HCT116 (cell line): ENCODE measurements at regions of chr11 and their contacts with region 1.

Region 1: GRCh38 chr11:119101759-119102423 is at the start of gene DPAGT1:
- DNase-seq: peak; percentile 98
- ATAC-seq: peak; percentile 80
- H3K4me3 ChIP-seq: peak within 1 kb of the TSS; percentile 58 to 78
- H3K27ac ChIP-seq: peak within 1 kb of the TSS; percentile 96
- H3K4me1 ChIP-seq: peaks cover 33 to 42% of the 10 kb centered on the region in 2 experiments
- H3K27me3 ChIP-seq: no peaks in the 10 kb centered on the region
- CTCF ChIP-seq: no peak
- POLR2A ChIP-seq: no peak
- RAD21 ChIP-seq: no peak
- total RNA-seq, gene DPAGT1: 45.1 TPM

Region 2: DNA sequence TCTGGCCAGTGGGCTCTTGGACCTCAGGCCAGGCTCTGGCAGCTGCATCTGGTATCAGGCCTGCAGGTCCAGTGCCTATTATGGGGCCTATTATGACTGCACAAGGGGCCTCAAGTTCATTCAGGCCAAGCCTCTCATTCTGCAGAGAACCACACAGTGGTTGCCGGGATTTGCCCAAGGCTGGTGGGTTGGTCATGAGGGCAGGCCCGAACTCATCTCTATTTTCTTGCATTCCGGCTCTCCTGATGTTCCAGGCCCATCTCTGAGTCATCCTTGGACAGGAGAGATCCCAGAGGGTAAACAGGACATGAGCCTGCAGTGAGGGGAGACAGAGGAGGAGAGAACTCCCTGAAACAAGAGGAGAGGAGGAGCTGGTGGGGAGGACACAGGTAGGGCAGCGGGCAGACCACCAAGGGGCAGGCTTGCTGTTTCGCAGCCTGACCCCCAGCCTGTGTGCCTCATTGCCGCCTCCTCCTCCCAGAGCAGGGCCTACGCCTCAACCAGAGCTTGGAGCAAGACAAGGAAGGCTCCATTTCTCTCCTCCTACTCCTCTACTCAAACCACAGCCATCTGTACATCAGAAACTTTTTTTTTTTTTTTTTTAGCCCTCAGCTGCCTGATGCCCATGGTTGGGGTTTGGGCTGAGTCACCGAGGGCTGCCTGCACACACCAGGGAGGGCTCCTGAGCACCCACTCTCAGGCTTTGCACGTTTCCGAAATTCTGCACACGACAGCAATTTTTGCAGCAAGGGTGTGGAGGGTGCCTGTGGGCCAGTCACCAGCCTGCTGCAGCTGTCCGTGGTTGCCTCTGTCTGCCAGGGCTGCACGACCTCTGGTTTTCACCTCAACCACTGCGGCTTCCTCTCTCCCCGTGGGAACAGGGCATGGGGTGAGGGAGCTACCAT is 409.7 kb before region 1 on chr11:
- CTCF ChIA-PET with region 1: no interaction called
- POLR2A ChIA-PET with region 1: no interaction called
- RAD21 ChIA-PET with region 1: no interaction called
- intact Hi-C with region 1: no loop called
- DNase-seq: no peak
- ATAC-seq: no peak
- H3K4me3 ChIP-seq: no peak overlapping the region
- H3K27ac ChIP-seq: no peak overlapping the region
- H3K4me1 ChIP-seq: peaks cover 5 to 33% of the 10 kb centered on the region in 2 experiments; a peak in 3 of 4 replicates
- H3K27me3 ChIP-seq: no peaks in the 10 kb centered on the region
- CTCF ChIP-seq: no peak
- POLR2A ChIP-seq: no peak
- RAD21 ChIP-seq: no peak

Region 3: GRCh38 chr11:118953265-118953664 is 148.6 kb before region 1 on chr11:
- CTCF ChIA-PET with region 1: no interaction called
- POLR2A ChIA-PET with region 1: no interaction called
- RAD21 ChIA-PET with region 1: no interaction called
- intact Hi-C with region 1: no loop called
- DNase-seq: no peak
- ATAC-seq: no peak
- H3K4me3 ChIP-seq: no peak overlapping the region
- H3K27ac ChIP-seq: no peak overlapping the region
- H3K4me1 ChIP-seq: peaks cover 0 to 19% of the 10 kb centered on the region in 2 experiments; a peak in 2 of 4 replicates
- H3K27me3 ChIP-seq: no peaks in the 10 kb centered on the region
- CTCF ChIP-seq: no peak
- POLR2A ChIP-seq: no peak
- RAD21 ChIP-seq: no peak

Region 4: DNA sequence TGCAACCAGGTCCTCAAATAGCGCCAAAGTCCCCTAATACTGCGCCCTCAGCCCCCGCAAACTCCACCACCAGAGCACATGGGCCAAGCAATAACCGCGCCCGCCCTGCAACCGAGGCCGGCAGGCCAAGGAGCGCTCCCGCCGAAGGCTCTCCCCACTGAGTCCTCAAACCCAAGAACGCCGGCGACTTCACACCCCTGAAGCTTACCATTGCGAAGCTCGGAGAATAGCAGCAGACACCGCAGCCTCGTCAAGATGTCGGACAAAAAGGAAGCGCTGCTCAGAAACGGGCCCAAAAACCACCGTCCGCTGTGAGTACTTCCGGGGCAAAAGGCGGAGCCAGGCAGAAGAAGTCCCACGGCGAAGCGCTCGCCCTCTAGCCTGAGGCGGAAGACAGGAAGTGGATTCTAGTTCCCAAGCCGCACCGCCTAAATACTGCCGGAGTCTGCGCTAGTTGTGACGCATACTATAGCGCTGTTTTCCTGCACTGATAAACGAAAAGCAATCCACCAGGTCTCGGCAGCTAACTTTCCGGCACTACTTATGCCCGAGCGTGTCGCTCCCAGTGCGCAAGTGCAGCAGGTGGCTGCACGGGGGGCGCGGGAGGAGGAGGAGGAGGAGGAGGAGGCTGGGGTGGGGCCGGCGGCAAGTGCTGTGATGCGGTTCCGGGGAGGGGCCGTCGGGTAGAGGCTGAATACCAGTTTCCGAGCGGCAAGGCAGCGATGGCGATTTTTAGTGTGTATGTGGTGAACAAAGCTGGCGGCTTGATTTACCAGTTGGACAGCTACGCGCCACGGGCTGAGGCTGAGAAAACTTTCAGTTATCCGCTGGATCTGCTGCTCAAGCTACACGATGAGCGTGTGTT is 83.6 kb before region 1 on chr11 and contains the starts of genes RPS25 and TRAPPC4:
- CTCF ChIA-PET with region 1: no interaction called
- POLR2A ChIA-PET with region 1: interaction called, 3 read pairs
- RAD21 ChIA-PET with region 1: no interaction called
- intact Hi-C with region 1: loop called (anchors 2 kb)
- DNase-seq: peak; percentile 94
- ATAC-seq: peak; percentile 81
- H3K4me3 ChIP-seq: peak within 1 kb of the TSS; percentile 72 to 91
- H3K27ac ChIP-seq: peak within 1 kb of the TSS; percentile 96
- H3K4me1 ChIP-seq: peaks cover 18 to 32% of the 10 kb centered on the region in 2 experiments
- H3K27me3 ChIP-seq: no peaks in the 10 kb centered on the region
- CTCF ChIP-seq: no peak
- POLR2A ChIP-seq: peak; percentile 79
- RAD21 ChIP-seq: no peak
- total RNA-seq, gene RPS25: 1,404 TPM
- total RNA-seq, gene TRAPPC4: 61.6 TPM

Region 5: GRCh38 chr11:119168471-119169281 is 66.8 kb after region 1 on chr11 and contains the start of gene NLRX1:
- CTCF ChIA-PET with region 1: no interaction called
- POLR2A ChIA-PET with region 1: interaction called, 4 read pairs
- RAD21 ChIA-PET with region 1: no interaction called
- intact Hi-C with region 1: loop called (anchors 2 kb)
- DNase-seq: peak; percentile 73
- ATAC-seq: peak; percentile 85
- H3K4me3 ChIP-seq: peak within 1 kb of the TSS; percentile 71 to 83
- H3K27ac ChIP-seq: peak within 1 kb of the TSS; percentile 94
- H3K4me1 ChIP-seq: peaks cover 29 to 46% of the 10 kb centered on the region in 2 experiments
- H3K27me3 ChIP-seq: no peaks in the 10 kb centered on the region
- CTCF ChIP-seq: peak; percentile 78 to 95 (median 90)
- POLR2A ChIP-seq: peak; percentile 59
- RAD21 ChIP-seq: peak; percentile 60
- total RNA-seq, gene NLRX1: 21.4 TPM

Region 6: GRCh38 chr11:119295178-119295577 is 193.3 kb after region 1 on chr11:
- CTCF ChIA-PET with region 1: no interaction called
- POLR2A ChIA-PET with region 1: no interaction called
- RAD21 ChIA-PET with region 1: no interaction called
- intact Hi-C with region 1: loop called (anchors 10 kb)
- DNase-seq: no peak
- ATAC-seq: peak; percentile 88
- H3K4me3 ChIP-seq: no peak overlapping the region
- H3K27ac ChIP-seq: no peak overlapping the region
- H3K4me1 ChIP-seq: peaks cover 0 to 4% of the 10 kb centered on the region in 2 experiments; a peak in 2 of 4 replicates
- H3K27me3 ChIP-seq: no peaks in the 10 kb centered on the region
- CTCF ChIP-seq: peak in 2 of 3 experiments; percentile 28 to 31; a peak in 2 of 6 replicates
- POLR2A ChIP-seq: no peak
- RAD21 ChIP-seq: peak; percentile 52

Region 7: GRCh38 chr11:119381181-119381988 is 279.5 kb after region 1 on chr11 and contains the start of gene USP2:
- CTCF ChIA-PET with region 1: no interaction called
- POLR2A ChIA-PET with region 1: no interaction called
- RAD21 ChIA-PET with region 1: no interaction called
- intact Hi-C with region 1: loop called (anchors 5 kb)
- DNase-seq: peak; percentile 93
- ATAC-seq: peak; percentile 96
- H3K4me3 ChIP-seq: peak within 1 kb of the TSS; percentile 63 to 65
- H3K27ac ChIP-seq: no peak within 1 kb of the TSS; the same call in 1 of the 2 replicates
- H3K4me1 ChIP-seq: peaks cover 6 to 33% of the 10 kb centered on the region in 2 experiments; a peak in 3 of 4 replicates
- H3K27me3 ChIP-seq: no peaks in the 10 kb centered on the region
- CTCF ChIP-seq: peak; percentile 83 to 86 (median 86)
- POLR2A ChIP-seq: no peak
- RAD21 ChIP-seq: peak; percentile 66
- total RNA-seq, gene USP2: 5.0 TPM